Activated B cell treated with CpG ODN at 0.5 μM for 24 hours (primary cell): ENCODE measurements at regions of chr11 and their contacts with region 1.

Region 1: GRCh38 chr11:10322830-10323792 is 18.2 kb downstream of the ADM start:
- DNase-seq: no peak
- ATAC-seq: peak; percentile 69
- H3K4me3 Mint-ChIP-seq: no peak overlapping the region
- H3K27ac Mint-ChIP-seq: peak overlapping the region; percentile 67
- H3K4me1 Mint-ChIP-seq: peaks cover 14% of the 10 kb centered on the region
- H3K27me3 Mint-ChIP-seq: peaks cover 11% of the 10 kb centered on the region
- CTCF ChIP-seq: no peak

Region 2: GRCh38 chr11:9015677-9016076 is 1307.4 kb before region 1 on chr11:
- CTCF ChIA-PET with region 1: interaction called, 6 read pairs
- POLR2A ChIA-PET with region 1: no interaction called
- intact Hi-C with region 1: loop called (anchors 5 kb)
- DNase-seq: no peak
- ATAC-seq: peak; percentile 69
- H3K4me3 Mint-ChIP-seq: no peak overlapping the region
- H3K27ac Mint-ChIP-seq: no peak overlapping the region
- H3K4me1 Mint-ChIP-seq: no peaks in the 10 kb centered on the region
- H3K27me3 Mint-ChIP-seq: peaks cover 7% of the 10 kb centered on the region
- CTCF ChIP-seq: peak; percentile 26

Region 3: GRCh38 chr11:9861860-9862725 is 461.0 kb before region 1 on chr11:
- CTCF ChIA-PET with region 1: interaction called, 6 read pairs
- POLR2A ChIA-PET with region 1: no interaction called
- intact Hi-C with region 1: loop called (anchors 1 kb)
- DNase-seq: no peak
- ATAC-seq: peak; percentile 82
- H3K4me3 Mint-ChIP-seq: no peak overlapping the region
- H3K27ac Mint-ChIP-seq: no peak overlapping the region
- H3K4me1 Mint-ChIP-seq: peaks cover 31% of the 10 kb centered on the region
- H3K27me3 Mint-ChIP-seq: no peaks in the 10 kb centered on the region
- CTCF ChIP-seq: no peak

Region 4: DNA sequence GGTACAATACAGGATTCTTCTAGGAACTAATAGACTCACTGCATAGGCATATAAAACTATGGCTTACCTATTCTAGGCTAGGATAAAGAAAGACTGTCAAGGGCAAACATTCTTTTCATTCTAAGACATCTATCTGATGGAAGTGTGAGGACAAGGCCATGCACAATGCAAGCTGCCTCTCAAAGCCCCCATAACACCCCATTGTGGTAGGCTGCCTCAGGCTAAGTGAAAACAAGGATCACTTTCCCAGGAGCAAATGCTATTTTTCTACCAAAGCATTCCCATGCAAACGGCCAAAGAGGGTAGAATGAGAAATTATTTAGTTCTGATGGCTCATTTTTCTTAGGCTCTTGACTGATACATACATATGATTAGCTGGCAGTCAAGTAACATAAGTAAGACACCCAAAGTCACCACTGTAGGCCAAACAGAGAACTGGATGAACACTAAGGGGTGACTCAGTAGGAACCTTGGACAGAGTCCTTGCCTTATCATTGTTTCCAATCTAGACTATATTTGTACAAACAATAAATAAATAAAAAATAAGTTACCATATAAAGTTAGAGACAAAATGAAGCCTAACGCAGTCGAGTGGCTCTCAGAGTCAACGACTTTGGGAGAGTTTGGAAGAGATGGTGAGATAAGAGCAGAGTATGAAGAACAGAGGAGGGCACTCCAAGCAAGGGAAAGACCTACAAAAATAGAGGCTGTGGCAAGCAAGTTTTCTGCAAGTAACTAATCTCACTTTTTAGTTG is 332.7 kb before region 1 on chr11:
- CTCF ChIA-PET with region 1: no interaction called
- POLR2A ChIA-PET with region 1: no interaction called
- intact Hi-C with region 1: loop called (anchors 5 kb)
- DNase-seq: no peak
- ATAC-seq: no peak
- H3K4me3 Mint-ChIP-seq: no peak overlapping the region
- H3K27ac Mint-ChIP-seq: no peak overlapping the region
- H3K4me1 Mint-ChIP-seq: peaks cover 31% of the 10 kb centered on the region
- H3K27me3 Mint-ChIP-seq: no peaks in the 10 kb centered on the region
- CTCF ChIP-seq: no peak

Region 5: DNA sequence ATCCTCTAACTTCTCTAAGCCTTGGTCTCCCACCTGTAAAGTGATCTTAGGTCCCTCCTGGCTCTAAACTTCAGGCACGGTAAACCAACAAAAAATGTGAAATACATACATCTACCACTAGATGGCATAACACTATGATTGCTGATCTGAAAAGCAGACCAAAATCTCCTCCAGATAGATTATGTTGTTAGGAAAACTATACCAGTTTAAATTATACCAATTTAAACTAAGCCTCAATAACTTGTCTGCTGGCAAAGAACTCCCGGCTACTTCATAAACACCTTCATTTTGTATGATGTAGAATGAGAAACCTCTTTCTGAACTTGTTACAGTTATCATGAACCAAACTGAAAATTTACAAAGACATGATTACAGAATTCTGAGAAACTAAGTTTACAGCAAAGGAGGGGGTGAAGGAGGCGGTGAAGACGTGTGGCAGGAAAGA is 115.0 kb before region 1 on chr11:
- CTCF ChIA-PET with region 1: interaction called, 17 read pairs
- POLR2A ChIA-PET with region 1: no interaction called
- intact Hi-C with region 1: loop called (anchors 1 kb)
- DNase-seq: no peak
- ATAC-seq: peak; percentile 37
- H3K4me3 Mint-ChIP-seq: no peak overlapping the region
- H3K27ac Mint-ChIP-seq: no peak overlapping the region
- H3K4me1 Mint-ChIP-seq: no peaks in the 10 kb centered on the region
- H3K27me3 Mint-ChIP-seq: no peaks in the 10 kb centered on the region
- CTCF ChIP-seq: peak; percentile 31